Mammary epithelial cell (primary cell): ENCODE measurements at regions of chr18 and their contacts with region 1.

Region 1: GRCh38 chr18:79567481-79568147 is 112.0 kb upstream of the CTDP1 start:
- DNase-seq: peak; percentile 75
- H3K4me3 ChIP-seq: no peak overlapping the region
- H3K27ac ChIP-seq: peak overlapping the region; percentile 11
- H3K4me1 ChIP-seq: peaks cover 13% of the 10 kb centered on the region
- H3K27me3 ChIP-seq: no peaks in the 10 kb centered on the region
- CTCF ChIP-seq: no peak

Region 2: DNA sequence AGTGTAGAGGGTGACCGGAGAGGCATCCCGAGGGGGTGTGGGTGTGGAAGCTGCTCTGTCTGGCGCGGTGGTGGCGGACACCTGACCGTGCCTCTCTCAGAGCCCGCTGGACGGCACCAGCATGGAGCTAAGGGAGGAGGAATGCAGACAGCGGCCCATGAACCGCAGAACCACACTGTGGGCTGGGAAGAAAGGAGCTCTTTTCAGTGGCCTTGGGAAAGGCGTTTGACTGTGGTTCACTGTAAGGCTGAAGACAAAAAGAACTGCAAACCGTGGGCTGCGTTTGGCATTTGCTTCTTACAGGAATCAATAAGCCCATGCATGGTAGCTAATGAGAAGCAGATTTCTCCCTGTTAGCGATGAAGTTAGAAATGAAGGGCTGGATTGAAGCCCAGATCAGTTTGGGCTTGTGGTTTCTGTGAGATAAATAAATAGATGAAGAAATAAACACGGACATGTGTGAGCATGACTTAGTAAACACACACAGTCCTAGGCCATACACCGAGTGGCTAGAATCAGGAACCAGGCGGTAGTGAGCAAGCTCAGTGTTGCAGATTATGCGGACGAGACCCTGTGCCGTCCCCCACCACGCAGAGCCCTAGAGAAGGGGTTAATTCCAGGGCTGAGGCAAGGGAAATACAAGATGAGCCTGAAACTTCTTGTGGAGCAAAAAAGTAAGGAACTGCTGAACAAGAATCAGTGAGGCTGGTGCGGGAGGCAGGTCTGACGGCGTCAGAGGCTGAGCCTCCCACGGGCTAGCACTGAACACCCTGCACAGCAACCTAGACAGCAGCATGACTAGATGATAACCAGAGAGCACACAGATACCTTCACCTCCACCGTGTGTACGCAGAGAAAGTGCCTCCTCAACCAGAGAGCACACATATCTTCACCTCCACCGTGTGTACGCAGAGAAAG is 201.2 kb before region 1 on chr18:
- CTCF ChIA-PET with region 1: no interaction called
- dilution Hi-C with region 1: no loop called
- in situ Hi-C with region 1: no loop called
- intact Hi-C with region 1: no loop called
- DNase-seq: no peak
- H3K4me3 ChIP-seq: no peak overlapping the region
- H3K27ac ChIP-seq: no peak overlapping the region
- H3K4me1 ChIP-seq: peaks cover 3% of the 10 kb centered on the region
- H3K27me3 ChIP-seq: no peaks in the 10 kb centered on the region
- CTCF ChIP-seq: no peak

Region 3: GRCh38 chr18:79650959-79651358 is 83.3 kb after region 1 on chr18:
- CTCF ChIA-PET with region 1: no interaction called
- dilution Hi-C with region 1: loop called (anchors 5 kb)
- in situ Hi-C with region 1: no loop called
- intact Hi-C with region 1: no loop called
- DNase-seq: no peak
- H3K4me3 ChIP-seq: no peak overlapping the region
- H3K27ac ChIP-seq: no peak overlapping the region
- H3K4me1 ChIP-seq: no peaks in the 10 kb centered on the region
- H3K27me3 ChIP-seq: no peaks in the 10 kb centered on the region
- CTCF ChIP-seq: no peak

Region 4: GRCh38 chr18:79805211-79805887 is 237.7 kb after region 1 on chr18:
- CTCF ChIA-PET with region 1: no interaction called
- dilution Hi-C with region 1: no loop called
- in situ Hi-C with region 1: no loop called
- intact Hi-C with region 1: no loop called
- DNase-seq: no peak
- H3K4me3 ChIP-seq: no peak overlapping the region
- H3K27ac ChIP-seq: no peak overlapping the region
- H3K4me1 ChIP-seq: no peaks in the 10 kb centered on the region
- H3K27me3 ChIP-seq: no peaks in the 10 kb centered on the region
- CTCF ChIP-seq: no peak